ENCODE measurements at regions of chr3 and their contacts with region 1.

Region 1: GRCh38 chr3:15205934-15206661 is at the start of gene CAPN7:
- DNase-seq: peak; percentile 94
- ATAC-seq: peak; percentile 90
- H3K4me3 Mint-ChIP-seq: peak within 1 kb of the TSS; percentile 78
- H3K27ac Mint-ChIP-seq: peak within 1 kb of the TSS; percentile 85
- H3K4me1 Mint-ChIP-seq: peaks cover 21% of the 10 kb centered on the region
- H3K27me3 Mint-ChIP-seq: no peaks in the 10 kb centered on the region
- CTCF ChIP-seq: no peak
- total RNA-seq, gene CAPN7: 22.2 to 27.5 TPM

Region 2: GRCh38 chr3:15108082-15108545 is 98.0 kb before region 1 on chr3:
- CTCF ChIA-PET with region 1: interaction called, 106 read pairs
- POLR2A ChIA-PET with region 1: interaction called, 3 read pairs
- intact Hi-C with region 1: loop called (anchors 10 kb)
- DNase-seq: peak; percentile 76
- ATAC-seq: peak; percentile 99
- H3K4me3 Mint-ChIP-seq: no peak overlapping the region
- H3K27ac Mint-ChIP-seq: no peak overlapping the region
- H3K4me1 Mint-ChIP-seq: peaks cover 2% of the 10 kb centered on the region
- H3K27me3 Mint-ChIP-seq: peaks cover 8% of the 10 kb centered on the region
- CTCF ChIP-seq: peak; percentile 96

Region 3: DNA sequence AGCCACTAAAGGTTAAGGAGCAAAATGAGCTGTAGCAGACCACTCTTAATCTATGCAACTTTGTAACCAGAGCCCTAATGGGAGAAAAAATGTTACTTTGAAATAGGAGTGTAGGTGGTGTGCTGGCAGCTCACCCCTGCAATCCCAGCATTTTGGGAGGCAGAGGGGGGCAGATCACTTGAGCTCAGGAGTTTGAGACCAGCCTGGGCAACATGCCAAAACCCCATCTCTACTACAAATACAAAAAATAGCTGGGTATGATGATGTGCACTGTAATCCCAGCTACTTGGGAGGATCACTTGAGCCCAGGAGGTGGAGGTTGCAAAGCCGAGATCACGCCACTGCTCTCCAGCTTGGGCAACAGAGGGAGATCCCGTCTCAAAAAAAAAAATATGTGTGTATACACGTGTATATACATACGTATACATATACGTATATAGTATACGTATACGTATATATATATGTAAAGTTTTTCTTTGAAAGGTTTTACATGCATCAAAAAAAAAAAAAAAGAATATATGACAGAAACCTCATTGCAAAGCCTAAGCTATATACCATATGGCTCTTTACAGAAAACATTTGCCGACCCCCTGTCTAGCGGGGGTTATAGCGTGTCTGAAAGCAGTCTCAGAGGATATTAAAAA is 15.6 kb after region 1 on chr3:
- CTCF ChIA-PET with region 1: interaction called, 11 read pairs
- POLR2A ChIA-PET with region 1: interaction called, 6 read pairs
- intact Hi-C with region 1: no loop called
- DNase-seq: no peak
- ATAC-seq: no peak
- H3K4me3 Mint-ChIP-seq: no peak overlapping the region
- H3K27ac Mint-ChIP-seq: no peak overlapping the region
- H3K4me1 Mint-ChIP-seq: peaks cover 4% of the 10 kb centered on the region
- H3K27me3 Mint-ChIP-seq: no peaks in the 10 kb centered on the region
- CTCF ChIP-seq: no peak

Region 4: GRCh38 chr3:15256861-15257341 is 50.8 kb after region 1 on chr3:
- CTCF ChIA-PET with region 1: interaction called, 10 read pairs
- POLR2A ChIA-PET with region 1: no interaction called
- intact Hi-C with region 1: no loop called
- DNase-seq: no peak
- ATAC-seq: no peak
- H3K4me3 Mint-ChIP-seq: no peak overlapping the region
- H3K27ac Mint-ChIP-seq: peak overlapping the region; percentile 21
- H3K4me1 Mint-ChIP-seq: peaks cover 6% of the 10 kb centered on the region
- H3K27me3 Mint-ChIP-seq: no peaks in the 10 kb centered on the region
- CTCF ChIP-seq: no peak

Region 5: GRCh38 chr3:15405448-15406050 is 199.5 kb after region 1 on chr3:
- CTCF ChIA-PET with region 1: interaction called, 125 read pairs
- POLR2A ChIA-PET with region 1: interaction called, 3 read pairs
- intact Hi-C with region 1: no loop called
- DNase-seq: peak; percentile 35
- ATAC-seq: peak; percentile 67
- H3K4me3 Mint-ChIP-seq: no peak overlapping the region
- H3K27ac Mint-ChIP-seq: no peak overlapping the region
- H3K4me1 Mint-ChIP-seq: no peaks in the 10 kb centered on the region
- H3K27me3 Mint-ChIP-seq: no peaks in the 10 kb centered on the region
- CTCF ChIP-seq: peak; percentile 63